ENCODE measurements at regions of chr9 and their contacts with region 1.

Region 1: GRCh38 chr9:99253772-99254431 is 31.8 kb downstream of the SEC61B start:
- DNase-seq: peak in 2 of 9 donors; percentile 8 to 89
- ATAC-seq: peak; percentile 73
- H3K4me3 ChIP-seq: no peak overlapping the region
- H3K4me3 Mint-ChIP-seq: peak overlapping the region in 6 of 10 donors; percentile 38 to 81 (median 50)
- H3K27ac ChIP-seq: no peak overlapping the region
- H3K27ac Mint-ChIP-seq: peak overlapping the region in 2 of 9 donors; percentile 56 to 92
- H3K4me1 ChIP-seq: no peaks in the 10 kb centered on the region
- H3K4me1 Mint-ChIP-seq: peaks cover 0 to 38% (median 7%) of the 10 kb centered on the region in 7 donors
- H3K27me3 ChIP-seq: no peaks in the 10 kb centered on the region
- H3K27me3 Mint-ChIP-seq: peaks cover 0 to 8% (median 0%) of the 10 kb centered on the region in 5 donors

Region 2: DNA sequence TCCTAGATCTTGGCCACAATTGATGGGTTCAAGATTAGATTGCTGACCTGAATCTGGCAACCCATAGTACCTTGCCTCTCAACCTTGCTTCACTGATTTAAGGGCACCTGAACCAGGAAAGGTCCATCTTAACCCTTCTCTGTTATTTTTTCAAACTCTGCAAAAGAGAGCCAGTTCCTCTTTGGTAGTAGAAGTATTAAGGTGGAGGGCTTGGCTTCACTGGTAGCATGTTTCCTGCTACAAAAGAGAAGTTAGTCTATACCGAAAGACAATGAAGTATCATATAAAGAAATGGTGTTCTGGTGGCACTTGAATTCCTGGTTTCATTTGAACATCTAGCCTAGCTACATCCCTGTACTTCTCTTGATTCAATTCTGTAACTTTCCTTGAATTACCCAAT is 40.7 kb before region 1 on chr9:
- CTCF ChIA-PET with region 1: no interaction called
- POLR2A ChIA-PET with region 1: no interaction called
- intact Hi-C with region 1: no loop called
- DNase-seq: no peak
- ATAC-seq: peak; percentile 26
- H3K4me3 ChIP-seq: no peak overlapping the region
- H3K4me3 Mint-ChIP-seq: no peak overlapping the region
- H3K27ac ChIP-seq: no peak overlapping the region
- H3K27ac Mint-ChIP-seq: no peak overlapping the region
- H3K4me1 ChIP-seq: no peaks in the 10 kb centered on the region
- H3K4me1 Mint-ChIP-seq: peaks cover 4 to 21% (median 18%) of the 10 kb centered on the region in 7 donors
- H3K27me3 ChIP-seq: no peaks in the 10 kb centered on the region
- H3K27me3 Mint-ChIP-seq: peaks cover 0 to 15% (median 0%) of the 10 kb centered on the region in 5 donors

Region 3: DNA sequence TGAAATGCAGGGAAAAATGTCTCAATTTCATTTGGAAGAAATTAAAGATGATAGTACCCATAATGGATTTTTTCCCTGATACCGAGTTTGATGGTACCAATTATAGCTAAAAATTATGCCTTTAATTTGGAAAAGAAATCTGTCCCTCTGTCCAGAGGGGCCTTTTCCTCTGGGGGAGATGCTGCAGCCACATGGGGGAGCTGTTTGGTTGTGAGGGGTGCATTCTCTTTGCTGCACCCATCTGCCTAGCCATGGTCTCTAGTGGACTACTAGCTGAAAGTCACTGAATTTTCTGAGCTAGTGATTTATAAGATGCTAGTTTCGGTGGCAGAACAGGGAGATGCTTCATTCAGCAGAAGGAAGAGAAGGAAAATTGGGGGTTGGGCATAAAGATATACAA is 22.2 kb before region 1 on chr9:
- CTCF ChIA-PET with region 1: no interaction called
- POLR2A ChIA-PET with region 1: no interaction called
- intact Hi-C with region 1: loop called in 1 of 2 experiments (anchors 2 kb)
- DNase-seq: peak in 2 of 9 donors; percentile 5 to 46
- ATAC-seq: peak; percentile 57
- H3K4me3 ChIP-seq: no peak overlapping the region
- H3K4me3 Mint-ChIP-seq: no peak overlapping the region
- H3K27ac ChIP-seq: no peak overlapping the region
- H3K27ac Mint-ChIP-seq: peak overlapping the region in 2 of 9 donors; percentile 43
- H3K4me1 ChIP-seq: no peaks in the 10 kb centered on the region
- H3K4me1 Mint-ChIP-seq: peaks cover 1 to 17% (median 5%) of the 10 kb centered on the region in 7 donors
- H3K27me3 ChIP-seq: no peaks in the 10 kb centered on the region
- H3K27me3 Mint-ChIP-seq: no peaks in the 10 kb centered on the region

Region 4: GRCh38 chr9:99579964-99580363 is 326.1 kb after region 1 on chr9:
- CTCF ChIA-PET with region 1: no interaction called
- POLR2A ChIA-PET with region 1: no interaction called
- intact Hi-C with region 1: no loop called
- DNase-seq: no peak
- ATAC-seq: peak; percentile 65
- H3K4me3 ChIP-seq: no peak overlapping the region
- H3K4me3 Mint-ChIP-seq: no peak overlapping the region
- H3K27ac ChIP-seq: no peak overlapping the region
- H3K27ac Mint-ChIP-seq: no peak overlapping the region
- H3K4me1 ChIP-seq: no peaks in the 10 kb centered on the region
- H3K4me1 Mint-ChIP-seq: peaks cover 0 to 3% (median 0%) of the 10 kb centered on the region in 7 donors
- H3K27me3 ChIP-seq: no peaks in the 10 kb centered on the region
- H3K27me3 Mint-ChIP-seq: peaks cover 0 to 12% (median 6%) of the 10 kb centered on the region in 5 donors

Measured in naive thymus-derived CD4-positive, alpha-beta T cell (primary cell).